MCF 10A (cell line): ENCODE measurements at regions of chr1 and their contacts with region 1.

Region 1: DNA sequence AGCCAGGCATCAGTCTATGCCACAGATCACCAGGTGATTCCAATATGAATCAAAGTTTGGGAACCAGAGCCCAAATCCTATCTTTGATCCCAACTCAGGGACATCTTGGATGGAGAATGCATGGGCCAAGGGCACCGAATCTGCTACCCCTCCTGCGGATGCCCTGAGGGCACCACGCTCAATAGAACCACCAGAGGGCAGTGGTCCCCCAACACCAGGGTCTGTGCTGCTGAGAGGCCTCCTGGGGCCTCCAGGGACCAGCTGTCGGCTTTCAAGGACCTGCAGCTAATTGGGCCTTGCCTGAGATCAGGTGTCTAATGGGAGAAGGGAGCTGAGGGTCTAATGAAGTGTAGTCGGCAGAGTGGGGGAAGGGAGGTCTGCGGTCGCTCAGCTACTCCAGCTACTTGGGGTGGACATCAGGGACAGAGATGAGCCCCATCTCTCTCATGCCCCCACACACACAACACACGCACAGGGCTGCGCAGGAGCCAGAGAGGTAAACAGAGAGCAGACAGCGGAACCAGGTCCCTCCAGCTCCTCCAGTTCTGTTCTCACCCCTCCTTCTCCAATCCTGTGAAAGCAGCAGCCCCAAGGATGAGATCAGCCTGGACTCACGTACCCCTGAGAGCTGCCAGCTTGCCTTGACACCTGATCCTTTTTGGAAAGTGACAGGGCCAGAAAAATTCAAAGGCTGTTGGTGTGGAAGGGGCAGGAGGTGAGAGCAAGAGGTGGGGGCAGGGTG is 34.9 kb upstream of the PPP1R15B start:
- DNase-seq: peak; percentile 65
- H3K4me3 Mint-ChIP-seq: no peak overlapping the region
- H3K27ac Mint-ChIP-seq: no peak overlapping the region
- H3K4me1 Mint-ChIP-seq: peaks cover 46% of the 10 kb centered on the region
- H3K27me3 Mint-ChIP-seq: no peaks in the 10 kb centered on the region
- CTCF ChIP-seq: peak; percentile 49

Region 2: DNA sequence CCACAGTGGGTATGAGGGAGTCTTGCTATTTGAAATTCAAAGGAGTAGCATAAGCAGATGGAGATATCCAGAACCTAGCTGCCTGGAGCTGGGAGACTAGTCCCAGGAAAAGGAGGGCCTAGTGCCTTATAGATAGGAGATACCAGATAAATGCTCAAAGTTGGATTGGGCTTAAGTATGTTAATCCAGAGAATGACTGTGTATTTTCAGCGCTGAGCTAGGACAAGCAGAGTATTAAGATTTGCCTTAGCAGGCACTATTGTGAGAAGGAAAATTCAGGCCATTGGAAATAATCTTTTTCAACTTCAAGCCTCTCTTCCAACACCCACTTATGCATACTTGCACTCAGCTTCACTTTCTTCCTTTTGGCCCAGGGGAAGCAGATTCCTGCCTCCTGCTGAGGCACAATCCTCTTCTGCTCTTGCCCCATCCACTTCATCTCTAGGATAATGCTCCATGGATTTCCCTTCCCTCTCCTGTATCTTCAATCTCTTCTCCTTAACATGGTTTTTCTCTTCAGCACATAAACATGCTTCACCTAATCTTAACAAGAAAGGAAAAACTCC is 26.9 kb after region 1 on chr1:
- CTCF ChIA-PET with region 1: interaction called, 12 read pairs
- POLR2A ChIA-PET with region 1: interaction called, 3 read pairs
- intact Hi-C with region 1: no loop called
- DNase-seq: no peak
- H3K4me3 Mint-ChIP-seq: no peak overlapping the region
- H3K27ac Mint-ChIP-seq: no peak overlapping the region
- H3K4me1 Mint-ChIP-seq: peaks cover 5% of the 10 kb centered on the region
- H3K27me3 Mint-ChIP-seq: peaks cover 18% of the 10 kb centered on the region
- CTCF ChIP-seq: no peak